RWPE1 (cell line): ENCODE measurements at regions of chr17 and their contacts with region 1.

Region 1: GRCh38 chr17:37699295-37699973 is 45.4 kb downstream of the HNF1B start:
- DNase-seq: no peak
- H3K27ac ChIP-seq: no peak overlapping the region
- CTCF ChIP-seq: no peak

Region 2: GRCh38 chr17:36848008-36848902 is 851.2 kb before region 1 on chr17:
- CTCF ChIA-PET with region 1: no interaction called
- POLR2A ChIA-PET with region 1: interaction called, 13 read pairs
- DNase-seq: no peak
- H3K27ac ChIP-seq: no peak overlapping the region; the same call in 1 of the 2 replicates
- CTCF ChIP-seq: no peak

Region 3: GRCh38 chr17:37661400-37662014 is 37.9 kb before region 1 on chr17:
- CTCF ChIA-PET with region 1: no interaction called
- POLR2A ChIA-PET with region 1: no interaction called
- DNase-seq: no peak
- H3K27ac ChIP-seq: no peak overlapping the region
- CTCF ChIP-seq: no peak

Region 4: DNA sequence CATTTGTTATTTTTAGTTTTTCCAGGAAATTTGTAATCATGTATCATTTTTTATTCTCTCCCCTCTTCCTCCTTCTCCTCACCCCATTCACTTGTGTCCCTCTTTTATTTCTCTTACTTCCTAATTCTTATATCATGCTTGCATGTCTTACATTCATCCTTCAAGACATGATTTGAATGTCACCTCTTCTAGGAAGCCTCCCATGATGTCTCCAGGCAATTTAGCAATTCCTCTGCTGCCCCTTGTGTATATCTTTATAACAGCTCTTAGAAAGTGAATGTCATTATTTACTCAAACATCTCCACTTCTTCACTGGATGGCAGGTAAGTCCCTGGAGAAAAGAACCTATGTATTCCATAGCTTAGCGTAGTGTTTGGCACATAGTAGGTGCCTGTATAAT is 37.6 kb after region 1 on chr17:
- CTCF ChIA-PET with region 1: no interaction called
- POLR2A ChIA-PET with region 1: no interaction called
- DNase-seq: no peak
- H3K27ac ChIP-seq: no peak overlapping the region
- CTCF ChIP-seq: no peak

Region 5: DNA sequence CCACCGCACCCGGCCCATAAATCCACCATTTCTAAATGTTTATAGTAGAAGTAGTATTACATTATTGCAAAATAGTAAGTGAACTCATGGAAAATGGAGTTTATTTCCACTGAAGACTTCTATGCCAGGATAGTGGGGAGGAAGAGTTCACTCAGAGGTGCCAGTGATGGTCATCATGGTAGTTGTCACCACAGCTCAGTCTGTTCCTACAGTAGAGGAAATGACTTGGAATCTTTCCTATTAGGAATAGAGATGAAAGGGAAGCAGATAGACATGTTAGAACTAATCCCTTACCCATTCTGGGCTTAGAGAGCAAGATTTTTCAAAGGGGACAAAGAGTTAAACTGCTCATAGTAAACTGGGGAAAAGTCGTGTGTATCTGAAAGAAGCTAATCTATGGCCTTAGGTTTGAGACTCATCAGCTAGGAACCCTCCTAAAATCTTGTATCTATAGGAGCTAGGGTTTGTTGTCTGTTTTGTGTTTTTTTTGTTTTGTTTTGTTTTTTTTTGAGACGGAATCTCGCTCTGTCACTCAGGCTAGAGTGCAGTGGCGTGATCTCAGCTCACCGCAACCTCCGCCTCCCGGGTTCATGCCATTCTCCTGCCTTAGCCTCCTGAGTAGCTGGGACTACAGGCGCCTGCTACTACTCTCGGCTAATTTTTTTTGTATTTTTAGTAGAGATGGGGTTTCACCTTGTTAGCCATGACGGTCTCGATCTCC is 617.8 kb after region 1 on chr17:
- CTCF ChIA-PET with region 1: no interaction called
- POLR2A ChIA-PET with region 1: no interaction called
- DNase-seq: no peak
- H3K27ac ChIP-seq: peak overlapping the region; percentile 35
- CTCF ChIP-seq: no peak